ENCODE measurements at regions of chr17 and their contacts with region 1.

Region 1: GRCh38 chr17:11031787-11032186 is 193.9 kb upstream of the PIRT start:
- DNase-seq: no peak
- H3K4me3 ChIP-seq: no peak overlapping the region
- H3K27ac ChIP-seq: no peak overlapping the region
- H3K4me1 ChIP-seq: peaks cover 4% of the 10 kb centered on the region
- H3K27me3 ChIP-seq: no peaks in the 10 kb centered on the region
- CTCF ChIP-seq: peak; percentile 38 to 44 (median 41)

Region 2: DNA sequence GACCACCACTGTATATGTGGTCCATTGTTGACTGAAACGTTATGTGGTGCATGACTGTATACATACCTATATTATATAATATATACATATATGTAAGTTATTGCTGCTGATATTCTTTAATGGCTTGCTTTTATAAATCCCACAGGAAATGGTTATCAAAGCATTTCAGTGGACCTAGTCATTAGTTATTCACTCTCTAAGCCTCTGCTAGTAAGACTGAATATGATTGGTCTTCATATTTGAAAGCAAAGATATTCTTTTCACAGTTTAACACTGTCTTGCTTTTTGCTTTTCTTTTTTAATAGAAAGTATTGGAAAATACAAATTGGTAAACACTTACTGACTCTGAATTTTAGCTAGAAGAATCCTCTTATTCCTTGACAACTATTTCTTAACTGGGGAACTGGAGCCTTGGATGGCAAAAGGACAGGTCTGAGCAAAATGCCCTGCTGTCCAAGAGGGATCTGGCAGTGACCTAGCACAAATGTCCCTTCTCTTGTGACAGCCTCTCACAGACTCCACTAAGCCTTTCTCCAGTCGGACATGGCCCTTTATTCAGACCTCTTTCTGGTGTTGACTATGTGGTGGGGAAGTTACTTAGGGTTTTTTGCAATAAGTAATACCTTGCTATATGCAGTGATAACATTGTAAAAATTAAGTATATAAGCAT is 467.7 kb before region 1 on chr17:
- dilution Hi-C with region 1: no loop called
- DNase-seq: no peak
- H3K4me3 ChIP-seq: no peak overlapping the region
- H3K27ac ChIP-seq: no peak overlapping the region
- H3K4me1 ChIP-seq: no peaks in the 10 kb centered on the region
- H3K27me3 ChIP-seq: no peaks in the 10 kb centered on the region
- CTCF ChIP-seq: no peak

Region 3: DNA sequence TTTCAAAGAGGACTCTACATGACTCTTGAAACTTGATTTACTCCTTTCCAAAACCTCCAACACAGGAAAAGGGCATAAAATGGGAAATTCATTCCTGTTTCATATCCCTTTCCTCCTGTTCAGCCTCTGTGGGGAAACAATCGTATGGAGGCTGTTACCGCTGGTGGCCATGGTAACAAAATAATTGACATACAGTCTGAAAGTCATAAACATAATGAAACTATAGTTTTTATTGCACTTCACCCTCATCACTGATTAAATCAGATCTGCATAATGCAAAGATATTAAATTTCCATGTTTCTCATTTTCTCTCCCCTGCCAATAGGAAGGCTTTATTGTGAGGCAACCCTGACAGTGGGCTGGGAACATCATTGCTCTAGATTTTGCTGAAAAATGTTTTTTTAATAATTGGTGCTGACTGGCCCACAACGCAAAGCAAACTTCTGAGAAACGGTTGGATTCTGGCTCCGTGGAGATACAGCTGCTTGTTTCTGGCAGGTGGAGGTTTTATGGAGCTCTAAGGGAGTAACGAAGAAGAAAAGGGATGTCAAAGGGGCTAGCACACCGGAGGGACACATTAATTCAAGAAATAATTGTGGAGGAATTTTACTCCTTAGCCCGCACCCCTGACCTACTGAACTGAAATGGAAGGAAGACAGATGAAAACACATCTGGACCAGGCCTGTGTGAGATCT is 55.0 kb after region 1 on chr17:
- dilution Hi-C with region 1: no loop called
- DNase-seq: no peak
- H3K4me3 ChIP-seq: no peak overlapping the region
- H3K27ac ChIP-seq: no peak overlapping the region
- H3K4me1 ChIP-seq: no peaks in the 10 kb centered on the region
- H3K27me3 ChIP-seq: no peaks in the 10 kb centered on the region
- CTCF ChIP-seq: no peak

Region 4: GRCh38 chr17:11144358-11145233 is 112.8 kb after region 1 on chr17:
- dilution Hi-C with region 1: loop called (anchors 25 kb)
- DNase-seq: peak; percentile 11
- H3K4me3 ChIP-seq: no peak overlapping the region
- H3K27ac ChIP-seq: no peak overlapping the region
- H3K4me1 ChIP-seq: no peaks in the 10 kb centered on the region
- H3K27me3 ChIP-seq: no peaks in the 10 kb centered on the region
- CTCF ChIP-seq: peak; percentile 75 to 79 (median 78)

Region 5: DNA sequence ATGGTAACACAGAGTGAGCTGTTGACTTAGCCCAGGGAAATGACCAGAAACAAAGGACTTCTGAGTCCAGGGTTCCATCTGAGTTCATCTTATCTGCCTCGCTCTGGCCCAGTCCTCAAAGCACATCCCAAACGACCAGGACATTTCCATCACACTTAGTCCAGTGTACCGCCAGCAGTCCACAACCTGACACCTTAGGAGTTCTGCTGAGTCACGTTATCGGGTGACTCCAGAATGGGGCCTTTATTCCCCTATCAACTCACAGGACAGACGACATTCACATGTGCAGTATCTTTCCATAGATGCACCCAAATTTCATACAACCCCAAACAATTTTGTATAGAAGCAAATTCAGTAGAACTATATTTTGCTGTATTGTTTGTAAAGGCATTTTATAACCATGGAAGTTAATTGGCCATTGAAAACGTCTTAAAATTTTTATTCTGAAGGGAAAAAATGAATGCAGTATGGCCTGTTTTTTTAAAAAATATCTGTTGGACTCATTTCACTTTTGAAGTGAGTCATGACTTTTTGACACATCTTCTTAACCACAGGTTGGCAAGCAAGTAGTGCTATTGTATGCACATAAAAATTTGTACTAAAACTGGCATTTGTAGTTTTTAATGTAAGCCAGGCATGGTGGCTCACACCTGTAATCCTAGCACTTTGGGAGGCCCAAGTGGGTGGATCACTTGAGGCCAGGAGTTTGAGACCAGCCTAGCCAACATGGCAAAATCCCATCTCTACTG is 919.2 kb after region 1 on chr17:
- dilution Hi-C with region 1: loop called (anchors 25 kb)
- DNase-seq: no peak
- H3K4me3 ChIP-seq: no peak overlapping the region
- H3K27ac ChIP-seq: peak overlapping the region; percentile 26
- H3K4me1 ChIP-seq: peaks cover 28% of the 10 kb centered on the region
- H3K27me3 ChIP-seq: no peaks in the 10 kb centered on the region
- CTCF ChIP-seq: no peak

Measured in keratinocyte (primary cell).